ENCODE measurements at regions of chr1 and their contacts with region 1.

Region 1: DNA sequence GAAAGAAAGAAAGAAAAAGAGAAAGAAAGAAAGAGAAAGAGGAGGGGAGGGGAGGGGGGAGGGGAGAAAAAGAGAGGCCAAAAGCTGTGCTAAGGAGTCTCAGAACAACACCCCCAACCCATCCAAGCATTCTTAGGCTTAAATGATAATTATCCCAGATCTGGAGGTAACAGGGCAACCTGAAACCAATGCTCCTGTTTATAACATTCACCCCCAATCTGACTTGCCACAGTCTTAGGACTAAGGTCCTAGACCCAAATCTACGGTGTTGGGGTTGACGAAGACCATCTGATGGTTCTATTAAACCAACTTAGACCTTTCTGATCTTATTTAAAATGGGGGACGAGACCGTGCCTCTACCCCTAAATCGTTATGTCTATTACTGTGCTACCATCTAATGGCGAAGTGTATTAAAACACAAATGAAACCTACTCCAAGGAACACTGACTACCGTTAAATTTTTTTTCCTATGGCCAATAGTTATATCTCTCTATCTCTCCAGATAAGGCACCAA is 119.3 kb upstream of the CDC42BPA start:
- DNase-seq: no peak

Region 2: DNA sequence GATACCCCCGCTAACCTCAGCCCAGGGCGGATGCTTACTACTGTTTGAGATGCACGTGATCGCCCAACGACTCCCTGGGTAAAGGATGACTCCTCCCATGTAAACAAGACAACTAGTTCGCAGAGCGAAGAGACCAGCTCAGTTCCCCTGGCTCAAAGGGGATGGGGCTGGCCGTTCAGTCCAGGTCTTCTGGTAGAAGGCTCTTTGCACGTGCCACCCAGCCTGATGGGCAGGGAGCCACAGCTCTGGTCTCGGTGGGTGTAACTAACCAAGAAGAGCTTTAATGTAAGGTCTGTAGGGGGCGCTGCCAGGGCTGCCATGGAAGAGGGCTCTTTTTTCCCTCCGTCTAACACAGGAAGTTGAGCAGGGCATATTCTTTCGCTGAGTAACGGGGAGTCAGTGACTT is 980.2 kb before region 1 on chr1:
- intact Hi-C with region 1: no loop called
- DNase-seq: no peak

Region 3: DNA sequence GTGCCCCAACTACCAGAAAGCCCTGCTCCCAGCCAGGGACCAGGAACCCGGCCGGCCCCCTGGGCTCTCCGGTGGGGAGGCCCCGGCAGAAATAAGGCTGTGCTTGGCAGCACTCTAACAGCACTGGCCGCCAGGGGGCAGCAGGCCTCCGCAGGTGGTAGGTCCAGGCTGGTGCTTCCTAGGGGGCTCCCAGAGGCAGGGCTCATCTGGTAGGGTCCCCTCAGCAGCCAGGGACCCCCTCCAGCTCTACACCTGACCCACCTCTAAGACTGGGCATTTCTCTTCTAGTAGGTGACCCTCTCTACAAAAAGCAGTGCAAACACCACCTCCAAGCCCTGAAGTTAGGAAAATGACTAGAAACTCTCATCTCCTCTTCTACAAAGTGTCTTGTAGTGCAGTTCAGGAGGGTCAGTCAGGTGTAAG is 803.4 kb before region 1 on chr1:
- intact Hi-C with region 1: loop called (anchors 5 kb)
- DNase-seq: peak; percentile 67 to 97 (median 88)

Region 4: GRCh38 chr1:226912587-226913176 is 524.9 kb before region 1 on chr1:
- intact Hi-C with region 1: loop called (anchors 5 kb)
- DNase-seq: peak in 8 of 10 donors; percentile 43 to 93 (median 60)

Region 5: DNA sequence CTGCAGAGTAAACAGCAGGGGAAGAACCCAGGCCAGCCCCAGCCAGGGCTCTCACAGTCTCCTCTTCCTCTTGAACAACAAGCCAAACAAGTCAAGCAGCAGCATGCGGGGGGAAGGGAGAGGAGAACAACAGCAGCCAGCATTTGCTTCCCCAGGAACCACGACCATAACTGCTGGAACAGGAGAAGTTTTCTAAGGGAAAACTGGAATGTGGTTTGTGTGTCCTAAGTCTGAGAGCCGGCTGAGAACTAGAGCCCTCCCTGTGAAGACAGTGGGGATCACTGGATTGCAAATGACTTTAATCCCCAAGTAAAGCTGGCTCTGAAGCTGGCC is 449.3 kb before region 1 on chr1:
- intact Hi-C with region 1: loop called (anchors 5 kb)
- DNase-seq: peak in 5 of 10 donors; percentile 16 to 91 (median 78)

Region 6: GRCh38 chr1:227234998-227235405 is 202.6 kb before region 1 on chr1:
- intact Hi-C with region 1: loop called (anchors 2 kb)
- DNase-seq: peak in 1 of 10 donors; percentile 38

Region 7: GRCh38 chr1:227563324-227564201 is 126.0 kb after region 1 on chr1 and contains the start of gene ZNF678:
- intact Hi-C with region 1: no loop called
- DNase-seq: peak; percentile 86 to 99 (median 92)